T-cell (primary cell): ENCODE measurements at regions of chr6 and their contacts with region 1.

Region 1: DNA sequence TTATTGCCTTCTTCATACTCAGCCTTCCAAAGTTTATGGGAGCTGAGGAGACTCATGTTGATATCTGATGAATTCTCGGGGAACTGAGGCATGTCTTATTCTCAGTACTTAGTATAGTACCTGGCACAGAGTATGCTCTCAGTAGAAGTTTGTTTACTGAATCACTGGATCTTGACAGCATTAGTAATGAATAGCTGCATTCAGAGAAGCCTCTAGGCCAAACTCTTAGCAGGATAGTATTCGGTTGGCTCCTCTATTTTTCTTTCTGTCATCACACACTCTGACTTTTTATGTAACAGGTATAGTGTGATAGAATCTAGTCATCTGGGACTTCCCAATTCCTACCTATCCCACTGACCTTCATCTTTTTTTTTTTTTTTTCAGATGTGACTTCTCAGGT is 566.4 kb upstream of the MAN1A1 start:
- DNase-seq: no peak
- ATAC-seq: no peak
- H3K4me3 ChIP-seq: no peak overlapping the region
- H3K4me3 Mint-ChIP-seq: no peak overlapping the region
- H3K27ac ChIP-seq: no peak overlapping the region
- H3K27ac Mint-ChIP-seq: no peak overlapping the region
- H3K4me1 ChIP-seq: no peaks in the 10 kb centered on the region
- H3K4me1 Mint-ChIP-seq: no peaks in the 10 kb centered on the region
- H3K27me3 ChIP-seq: no peaks in the 10 kb centered on the region
- H3K27me3 Mint-ChIP-seq: no peaks in the 10 kb centered on the region

Region 2: GRCh38 chr6:119902681-119903080 is 13.3 kb before region 1 on chr6:
- CTCF ChIA-PET with region 1: no interaction called
- POLR2A ChIA-PET with region 1: interaction called in 1 of 2 experiments, 13 read pairs
- DNase-seq: no peak
- ATAC-seq: no peak
- H3K4me3 ChIP-seq: no peak overlapping the region
- H3K4me3 Mint-ChIP-seq: no peak overlapping the region
- H3K27ac ChIP-seq: no peak overlapping the region
- H3K27ac Mint-ChIP-seq: no peak overlapping the region
- H3K4me1 ChIP-seq: no peaks in the 10 kb centered on the region
- H3K4me1 Mint-ChIP-seq: no peaks in the 10 kb centered on the region
- H3K27me3 ChIP-seq: no peaks in the 10 kb centered on the region
- H3K27me3 Mint-ChIP-seq: peaks cover 0 to 3% of the 10 kb centered on the region in 2 donors